Activated CD4-positive, alpha-beta T cell treated with anti-CD3 and anti-CD28 coated beads for 36 hours (primary cell): ENCODE measurements at regions of chr1 and their contacts with region 1.

Region 1: DNA sequence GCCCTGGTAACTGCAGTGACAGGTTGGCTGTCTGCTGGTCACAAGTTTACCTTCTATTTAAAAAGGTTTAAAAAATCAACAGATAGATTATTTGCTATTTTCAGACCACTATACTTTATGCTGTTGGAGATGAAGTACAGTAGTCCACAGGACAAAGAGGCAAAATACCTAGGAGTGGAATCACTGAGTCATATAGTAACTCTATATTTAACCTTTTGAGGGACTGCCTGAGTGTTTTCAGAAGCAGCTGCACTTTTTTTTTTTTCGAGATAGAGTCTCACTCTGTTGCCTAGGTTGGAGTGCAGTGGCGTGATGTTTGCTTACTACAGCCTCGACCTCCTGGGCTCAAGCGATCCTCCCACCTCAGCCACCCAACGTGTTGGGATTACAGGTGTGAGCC is 11.7 kb downstream of the CNIH4 start:
- DNase-seq: peak; percentile 32
- ATAC-seq: peak; percentile 75
- H3K4me3 Mint-ChIP-seq: no peak overlapping the region
- H3K27ac Mint-ChIP-seq: peak overlapping the region; percentile 51
- H3K4me1 Mint-ChIP-seq: peaks cover 66% of the 10 kb centered on the region
- H3K27me3 Mint-ChIP-seq: no peaks in the 10 kb centered on the region

Region 2: GRCh38 chr1:224356685-224357625 is 11.5 kb before region 1 on chr1 and contains the start of gene CNIH4:
- CTCF ChIA-PET with region 1: interaction called, 11 read pairs
- POLR2A ChIA-PET with region 1: no interaction called
- intact Hi-C with region 1: loop called in 1 of 2 experiments (anchors 1 kb)
- DNase-seq: peak; percentile 95
- ATAC-seq: peak; percentile 98
- H3K4me3 Mint-ChIP-seq: peak within 1 kb of the TSS; percentile 80
- H3K27ac Mint-ChIP-seq: peak within 1 kb of the TSS; percentile 89
- H3K4me1 Mint-ChIP-seq: peaks cover 30% of the 10 kb centered on the region
- H3K27me3 Mint-ChIP-seq: no peaks in the 10 kb centered on the region
- total RNA-seq, gene CNIH4: 29.9 to 49.6 TPM